ENCODE measurements at regions of chr3 and their contacts with region 1.

Region 1: DNA sequence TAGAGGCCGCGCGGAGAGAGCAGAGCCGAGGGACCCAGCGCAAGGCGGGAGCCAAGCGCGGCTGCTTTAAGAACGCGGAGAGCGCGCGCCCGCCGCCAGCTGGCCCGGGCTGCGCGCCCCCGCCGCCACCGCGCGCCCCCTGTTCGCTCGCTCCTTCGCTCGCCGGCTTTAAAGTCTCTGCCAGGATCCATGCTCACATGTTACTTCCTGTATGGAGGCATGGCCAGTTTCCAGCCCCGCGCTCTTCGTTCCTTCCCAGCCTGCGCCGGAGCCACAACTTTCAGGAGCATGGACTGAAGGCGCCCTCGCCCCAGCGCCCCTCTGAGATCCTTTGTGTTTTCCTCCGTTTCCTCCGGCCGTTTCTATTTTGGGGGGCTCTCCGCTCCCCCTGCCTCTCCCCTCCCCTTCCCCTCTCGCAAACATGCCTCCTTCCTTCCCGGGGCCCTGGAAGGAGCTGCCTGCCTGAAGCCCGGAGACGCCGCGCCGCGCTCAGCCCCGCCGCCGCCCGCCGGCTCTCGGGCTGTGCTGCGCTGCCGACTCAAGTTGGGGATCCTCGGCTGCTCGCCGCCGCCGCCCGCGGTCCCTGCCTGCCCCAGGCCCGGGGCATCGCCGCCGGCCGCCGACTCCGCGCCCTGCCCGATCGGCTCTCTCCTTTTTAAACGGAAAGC is at the start of gene PTPRG:
- DNase-seq: peak; percentile 94
- ATAC-seq: peak; percentile 83
- total RNA-seq, gene PTPRG: 29.7 TPM

Region 2: DNA sequence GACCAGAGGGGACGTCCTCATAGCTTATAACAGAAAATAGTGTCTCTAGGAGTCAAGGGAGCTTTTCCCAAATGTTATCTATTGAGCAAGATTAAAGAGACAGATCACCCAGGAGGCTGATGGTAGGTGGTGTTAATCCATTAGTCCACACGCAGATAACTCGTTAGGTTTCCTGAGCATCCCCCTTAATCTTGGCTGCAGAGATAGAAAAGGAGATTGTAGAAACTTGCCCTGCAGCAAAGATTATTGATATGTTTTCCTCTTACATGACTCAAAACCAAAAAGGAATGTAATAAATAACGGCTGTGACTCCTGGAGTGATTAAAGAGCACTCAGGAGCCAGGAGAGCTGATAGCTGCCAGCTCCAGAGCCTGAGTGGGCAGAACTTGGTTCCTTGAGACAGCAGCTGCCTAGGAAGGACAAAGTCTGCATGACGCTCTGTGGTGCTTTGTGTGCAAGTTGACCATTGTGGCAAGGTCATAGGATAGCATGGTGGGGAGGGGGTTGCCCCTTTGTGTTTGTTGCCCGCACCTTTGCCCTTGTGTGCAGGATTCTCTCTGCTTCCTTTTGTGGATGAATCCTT is 234.7 kb after region 1 on chr3:
- intact Hi-C with region 1: no loop called
- DNase-seq: no peak
- ATAC-seq: peak; percentile 32

Region 3: GRCh38 chr3:61807865-61808276 is 246.4 kb after region 1 on chr3:
- intact Hi-C with region 1: loop called (anchors 5 kb)
- DNase-seq: no peak
- ATAC-seq: peak; percentile 61

Region 4: DNA sequence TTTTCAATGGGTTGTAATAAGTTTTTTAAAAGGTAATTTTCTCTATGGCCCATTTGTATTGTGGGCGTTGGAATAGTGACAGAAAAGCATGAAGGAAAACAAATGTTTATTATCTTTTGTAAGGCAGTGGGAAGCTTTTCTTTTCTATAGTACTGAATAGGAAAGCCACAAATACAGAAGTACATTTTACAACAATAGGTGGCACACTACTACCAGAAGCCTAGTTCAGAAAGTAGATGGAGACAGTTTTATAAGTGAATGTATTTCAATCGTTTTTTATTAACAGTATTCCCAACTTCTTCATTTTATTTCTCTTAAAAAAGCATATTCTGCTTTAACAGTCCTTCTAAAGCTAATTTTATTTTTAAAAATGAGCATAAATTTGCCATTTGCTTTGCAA is 296.5 kb after region 1 on chr3:
- intact Hi-C with region 1: loop called (anchors 2 kb)
- DNase-seq: no peak
- ATAC-seq: peak; percentile 56

Region 5: DNA sequence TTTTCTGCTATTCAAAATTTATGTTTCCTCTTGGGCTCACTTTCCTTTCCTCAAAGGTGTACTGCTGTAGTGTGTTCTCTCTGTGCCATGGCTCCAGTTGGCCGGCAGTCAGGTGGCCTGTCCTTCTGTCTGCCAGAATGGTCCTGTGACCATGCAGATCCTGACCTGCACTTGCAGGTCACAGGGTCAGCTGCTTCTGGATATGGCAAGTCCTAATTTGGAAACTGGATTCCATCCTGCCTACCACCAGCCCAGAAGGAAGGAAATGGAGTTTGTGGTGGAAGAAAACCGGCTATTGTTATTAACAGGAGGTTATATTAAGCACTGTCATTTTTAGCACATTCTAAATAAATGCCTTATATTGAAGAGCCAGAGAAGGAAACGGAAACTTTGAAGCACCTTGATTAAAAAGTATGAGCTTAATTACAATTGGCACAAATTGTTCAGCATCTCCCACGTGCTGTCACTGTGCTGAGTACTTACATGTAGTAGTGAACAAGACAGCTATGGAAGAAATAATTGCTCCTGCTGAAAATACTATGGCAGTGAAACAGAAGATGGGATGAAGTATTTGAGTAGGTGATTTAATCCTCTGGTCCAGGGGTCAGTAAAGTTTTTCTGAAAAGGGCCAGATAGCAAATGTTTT is 362.7 kb after region 1 on chr3:
- intact Hi-C with region 1: loop called (anchors 5 kb)
- DNase-seq: peak; percentile 85
- ATAC-seq: peak; percentile 70

Region 6: DNA sequence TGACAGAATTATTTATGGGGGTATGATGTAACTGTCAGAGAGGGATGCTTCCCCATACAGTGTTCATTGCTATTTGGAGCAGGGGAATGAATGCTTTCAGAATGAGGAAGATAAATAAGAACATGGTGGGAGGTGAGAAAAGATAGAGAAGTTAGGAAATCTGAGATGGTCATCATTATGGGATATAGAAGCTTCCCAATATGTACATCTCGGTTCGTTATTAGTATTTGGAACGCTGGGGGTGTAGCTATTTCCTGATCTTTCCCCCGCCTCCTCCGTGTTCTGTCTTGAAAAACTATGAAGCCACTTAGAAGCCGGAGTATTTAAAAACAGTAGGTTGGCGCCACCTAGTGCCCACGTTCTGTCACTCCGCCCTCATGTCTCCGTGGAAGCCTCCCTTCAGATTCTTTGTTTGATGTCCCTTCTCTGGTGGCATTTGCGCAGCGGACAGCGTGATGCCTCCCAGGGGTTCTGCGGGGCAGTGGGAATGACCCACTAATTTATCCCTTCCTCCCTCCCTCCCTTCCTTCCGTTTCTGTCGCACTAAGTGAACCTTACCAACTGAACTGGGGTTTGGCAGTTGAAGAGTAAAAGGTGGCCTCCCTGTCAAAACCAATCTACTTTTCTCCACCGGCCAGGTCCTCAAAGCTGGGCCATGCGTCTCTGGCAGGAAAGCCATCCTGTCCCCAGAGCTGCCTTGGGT is 627.3 kb after region 1 on chr3:
- intact Hi-C with region 1: loop called (anchors 5 kb)
- DNase-seq: peak; percentile 84
- ATAC-seq: peak; percentile 73

Measured in Right ventricle myocardium superior (tissue), 1 donor.